Activated CD4-positive, alpha-beta T cell treated with anti-CD3 and anti-CD28 coated beads, Interleukin-2, amount 10 ng/mL, durations not matched to agents 24 days and 14 days (primary cell): ENCODE measurements at regions of chr13 and their contacts with region 1.

Region 1: DNA sequence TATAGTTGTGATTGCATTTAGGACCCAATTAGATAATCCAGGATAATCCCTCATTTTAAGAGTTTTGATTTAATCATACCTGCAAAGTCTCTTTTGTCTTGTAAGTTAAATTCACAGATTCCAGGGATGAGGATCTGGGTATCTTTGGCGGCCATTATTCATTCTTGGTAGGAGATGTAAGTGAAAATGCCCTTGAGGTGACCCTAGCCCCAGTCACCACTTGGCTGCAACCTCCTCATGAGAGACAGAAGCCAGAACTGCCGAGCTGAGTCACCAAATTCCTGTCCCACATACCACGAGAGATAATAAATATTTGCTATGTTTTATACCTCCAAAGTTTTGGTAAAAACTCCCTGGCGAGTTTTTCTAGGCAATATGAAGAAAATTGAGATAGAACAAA is 389.4 kb downstream of the RFC3 start:
- DNase-seq: no peak
- H3K4me3 Mint-ChIP-seq: no peak overlapping the region
- H3K27ac Mint-ChIP-seq: no peak overlapping the region
- H3K4me1 Mint-ChIP-seq: no peaks in the 10 kb centered on the region
- H3K27me3 Mint-ChIP-seq: no peaks in the 10 kb centered on the region

Region 2: GRCh38 chr13:34357435-34358232 is 150.3 kb after region 1 on chr13:
- intact Hi-C with region 1: loop called (anchors 10 kb)
- DNase-seq: no peak
- H3K4me3 Mint-ChIP-seq: no peak overlapping the region
- H3K27ac Mint-ChIP-seq: no peak overlapping the region
- H3K4me1 Mint-ChIP-seq: no peaks in the 10 kb centered on the region
- H3K27me3 Mint-ChIP-seq: no peaks in the 10 kb centered on the region